ENCODE measurements at regions of chr2 and their contacts with region 1.

Region 1: DNA sequence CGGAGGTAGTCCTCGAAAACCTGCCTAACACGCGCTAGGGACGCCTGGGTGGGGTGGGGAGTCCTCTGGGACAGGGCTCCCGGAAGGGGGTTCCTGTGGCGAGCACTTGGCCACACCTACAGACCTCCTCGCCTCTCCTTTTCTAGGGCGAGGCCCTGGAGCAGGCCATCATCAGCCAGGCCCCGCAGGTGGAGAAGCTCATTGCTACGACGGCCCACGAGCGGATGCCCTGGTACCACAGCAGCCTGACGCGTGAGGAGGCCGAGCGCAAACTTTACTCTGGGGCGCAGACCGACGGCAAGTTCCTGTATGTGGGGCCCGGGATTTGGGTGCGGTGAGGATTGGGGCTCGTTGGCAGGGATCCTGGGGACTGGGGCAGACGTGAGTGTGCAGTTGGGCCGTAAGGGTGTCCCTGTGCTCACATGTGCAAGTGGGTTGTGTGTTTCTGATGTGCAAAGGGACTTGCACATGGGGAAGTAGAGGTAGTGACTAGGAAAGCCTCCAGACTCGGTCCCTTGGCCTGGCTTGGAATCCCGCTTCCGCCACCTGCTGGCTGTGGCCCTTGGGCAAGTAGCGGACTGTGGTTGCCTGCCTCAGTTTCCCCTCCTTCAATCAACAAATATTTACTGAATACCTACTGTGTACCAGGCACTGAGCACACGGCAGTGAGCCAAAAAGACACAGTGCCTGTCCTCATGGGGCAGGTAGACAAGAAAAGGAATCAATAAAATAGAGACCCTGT is 11.7 kb downstream of the ZAP70 start:
- DNase-seq: no peak
- H3K4me3 ChIP-seq: no peak overlapping the region
- H3K27ac ChIP-seq: no peak overlapping the region
- H3K4me1 ChIP-seq: peaks cover 13% of the 10 kb centered on the region
- H3K27me3 ChIP-seq: no peaks in the 10 kb centered on the region
- CTCF ChIP-seq: no peak

Region 2: DNA sequence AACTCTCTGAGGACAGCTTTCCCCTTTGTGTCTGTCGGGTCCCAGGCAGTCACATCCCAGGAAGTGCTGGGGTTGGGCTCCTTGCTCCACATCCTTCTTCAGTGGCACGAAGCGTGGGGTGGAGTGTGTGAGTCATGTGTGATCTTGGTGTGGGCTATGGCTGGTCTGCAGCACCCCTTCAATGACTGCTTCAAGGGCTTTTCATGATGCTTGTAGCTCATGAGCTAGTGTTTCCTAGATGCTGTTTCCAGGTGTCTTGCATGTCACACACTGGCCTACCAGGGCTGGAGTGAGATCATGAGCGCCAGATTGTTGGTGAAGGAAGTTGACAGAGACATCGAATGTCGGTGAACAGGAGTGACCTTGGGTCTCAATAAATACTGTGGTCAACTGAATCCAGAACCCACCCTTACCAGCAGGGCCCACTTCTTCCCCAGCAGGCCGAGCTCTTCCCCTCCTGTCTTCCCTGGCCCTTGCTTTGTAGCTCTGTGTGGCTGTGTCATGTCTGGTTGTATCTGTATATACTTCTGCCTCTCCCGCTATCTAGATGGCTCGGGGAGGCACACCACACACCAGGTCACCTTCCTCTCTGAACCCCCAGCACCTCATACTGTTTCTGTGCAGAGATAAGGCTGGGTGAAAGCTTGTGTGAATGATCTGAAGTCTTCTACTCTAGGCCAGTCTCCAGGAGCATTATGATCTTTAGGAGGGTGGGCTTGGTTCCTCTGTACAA is 51.8 kb before region 1 on chr2:
- CTCF ChIA-PET with region 1: no interaction called
- dilution Hi-C with region 1: no loop called
- in situ Hi-C with region 1: no loop called
- intact Hi-C with region 1: no loop called
- DNase-seq: no peak
- H3K4me3 ChIP-seq: no peak overlapping the region
- H3K27ac ChIP-seq: no peak overlapping the region
- H3K4me1 ChIP-seq: no peaks in the 10 kb centered on the region
- H3K27me3 ChIP-seq: no peaks in the 10 kb centered on the region
- CTCF ChIP-seq: no peak

Region 3: DNA sequence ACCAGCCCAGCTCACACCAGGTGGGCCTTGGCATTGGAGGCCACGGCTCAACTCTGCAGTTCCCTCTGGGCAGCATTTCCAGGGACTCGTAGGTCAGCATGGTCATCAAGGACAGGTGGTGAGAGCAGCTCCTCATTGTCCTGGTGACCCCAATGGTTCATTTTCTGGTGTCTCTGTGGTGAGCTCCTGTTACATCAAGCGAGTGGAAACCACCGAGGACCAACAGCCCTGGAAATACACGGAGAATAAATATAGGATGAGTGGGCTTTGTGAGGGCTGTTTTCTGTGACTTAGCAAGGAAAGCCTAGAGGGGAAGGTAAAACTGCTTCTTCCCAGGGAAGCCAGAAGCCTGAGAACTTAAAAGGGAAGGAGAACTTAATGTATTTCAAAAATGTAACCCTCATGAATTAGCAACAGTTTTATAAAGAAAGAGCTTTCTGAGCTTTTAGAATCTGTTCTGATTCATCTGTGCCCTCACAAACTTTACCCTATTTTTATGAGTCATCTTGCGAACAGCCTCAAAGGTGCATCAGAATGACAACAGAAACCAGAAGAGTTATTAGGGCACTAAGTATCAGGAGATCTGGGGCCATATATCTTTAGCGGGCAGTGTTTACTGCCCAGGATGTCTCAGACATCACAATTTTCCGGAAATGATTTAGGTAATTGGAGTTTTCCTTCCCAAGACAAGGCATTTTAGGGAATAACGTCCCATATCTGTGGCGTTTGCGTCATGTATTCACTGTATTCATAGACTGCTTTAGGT is 36.9 kb before region 1 on chr2:
- CTCF ChIA-PET with region 1: no interaction called
- dilution Hi-C with region 1: loop called (anchors 5 kb)
- in situ Hi-C with region 1: no loop called
- intact Hi-C with region 1: no loop called
- DNase-seq: peak; percentile 39
- H3K4me3 ChIP-seq: no peak overlapping the region
- H3K27ac ChIP-seq: no peak overlapping the region
- H3K4me1 ChIP-seq: peaks cover 6% of the 10 kb centered on the region
- H3K27me3 ChIP-seq: no peaks in the 10 kb centered on the region
- CTCF ChIP-seq: no peak

Region 4: DNA sequence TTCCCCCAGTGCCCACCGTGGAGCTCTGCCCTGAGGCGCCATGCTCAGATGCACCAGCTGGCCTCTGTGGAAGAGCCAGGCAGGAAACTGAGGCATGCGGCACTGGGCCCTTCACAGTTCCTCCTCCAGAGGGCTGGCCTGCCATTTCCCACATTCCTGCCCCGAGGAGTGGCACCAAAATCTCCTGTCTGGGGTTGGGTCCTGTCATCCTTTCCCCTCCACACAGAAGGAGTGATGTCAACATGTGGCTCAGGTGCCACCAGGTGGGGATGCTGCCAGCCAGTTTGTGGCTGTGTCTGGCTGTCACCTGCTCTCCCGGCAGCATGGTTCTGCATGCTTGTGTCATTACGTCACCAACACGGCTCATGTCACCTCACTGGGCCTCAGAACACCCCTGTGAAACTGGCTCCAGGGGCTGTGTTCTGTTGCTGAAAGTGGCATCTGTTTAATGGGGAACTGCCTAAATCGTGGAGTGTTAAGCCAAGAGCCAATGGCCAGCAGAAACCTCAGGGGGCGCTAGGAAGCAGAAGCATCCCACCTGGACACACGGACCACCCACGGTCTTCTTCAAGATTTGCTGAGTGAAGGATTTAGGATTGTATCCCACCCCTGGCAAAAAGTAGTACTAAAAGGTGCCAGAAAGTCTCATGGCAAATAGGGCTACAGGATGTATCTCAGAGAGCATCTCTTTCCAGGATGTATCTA is 39.6 kb after region 1 on chr2:
- CTCF ChIA-PET with region 1: no interaction called
- dilution Hi-C with region 1: loop called (anchors 5 kb)
- in situ Hi-C with region 1: no loop called
- intact Hi-C with region 1: no loop called
- DNase-seq: no peak
- H3K4me3 ChIP-seq: no peak overlapping the region
- H3K27ac ChIP-seq: no peak overlapping the region
- H3K4me1 ChIP-seq: no peaks in the 10 kb centered on the region
- H3K27me3 ChIP-seq: no peaks in the 10 kb centered on the region
- CTCF ChIP-seq: no peak

Region 5: DNA sequence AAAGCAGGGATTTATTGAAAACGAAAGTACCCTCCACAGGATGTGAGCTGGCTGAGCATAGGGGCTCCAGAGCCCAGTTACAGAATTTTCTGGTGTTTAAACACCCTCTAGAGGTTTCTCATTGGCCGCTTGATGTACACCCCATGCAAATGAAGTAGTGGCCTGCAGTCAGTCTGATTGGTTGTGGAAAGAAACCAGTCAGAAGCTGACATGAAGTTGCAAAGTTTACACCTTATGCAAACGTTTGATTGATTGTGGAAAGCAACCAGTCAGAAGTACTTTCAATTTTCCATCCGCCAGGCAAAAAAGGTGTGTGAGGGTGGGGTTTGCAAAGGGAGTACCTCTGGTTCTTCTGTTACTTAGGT is 424.2 kb after region 1 on chr2:
- CTCF ChIA-PET with region 1: no interaction called
- dilution Hi-C with region 1: no loop called
- in situ Hi-C with region 1: no loop called
- intact Hi-C with region 1: no loop called
- DNase-seq: peak; percentile 92
- H3K4me3 ChIP-seq: peak overlapping the region; percentile 22 to 40 (median 34)
- H3K27ac ChIP-seq: peak overlapping the region; percentile 50
- H3K4me1 ChIP-seq: peaks cover 10% of the 10 kb centered on the region
- H3K27me3 ChIP-seq: no peaks in the 10 kb centered on the region
- CTCF ChIP-seq: no peak